GM12878 (cell line): ENCODE measurements at regions of chr4 and their contacts with region 1.

Region 1: GRCh38 chr4:26819478-26820095 is 41.1 kb upstream of the STIM2 start:
- DNase-seq: no peak
- ATAC-seq: peak; percentile 82
- H3K4me3 ChIP-seq: no peak overlapping the region
- H3K27ac ChIP-seq: no peak overlapping the region
- H3K4me1 ChIP-seq: peaks cover 16% of the 10 kb centered on the region
- H3K27me3 ChIP-seq: no peaks in the 10 kb centered on the region
- CTCF ChIP-seq: peak in 1 of 3 experiments; percentile 7; a peak in 1 of 6 replicates
- EP300 ChIP-seq: no peak
- POLR2A ChIP-seq: no peak
- RAD21 ChIP-seq: no peak

Region 2: DNA sequence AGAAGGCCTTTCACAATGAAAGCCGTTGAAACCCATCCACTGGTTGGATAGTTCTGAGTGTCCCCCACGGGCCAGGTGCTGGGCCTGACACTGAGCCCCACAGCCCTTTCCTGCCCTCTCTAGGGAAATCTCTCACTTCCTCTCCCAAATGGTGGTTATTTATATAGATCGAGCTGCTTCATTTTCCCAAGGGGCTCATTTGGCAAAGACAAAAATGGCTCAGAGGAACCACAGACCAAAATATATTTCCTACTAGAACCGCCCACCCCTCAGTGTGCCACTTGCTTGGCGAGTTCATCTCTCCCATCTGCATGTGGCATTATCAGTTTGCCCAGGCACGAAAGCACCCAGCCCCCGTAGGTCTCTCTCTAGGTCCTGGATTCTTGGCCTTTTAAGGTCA is 12.3 kb before region 1 on chr4:
- CTCF ChIA-PET with region 1: no interaction called
- POLR2A ChIA-PET with region 1: no interaction called
- RAD21 ChIA-PET with region 1: interaction called, 3 read pairs
- SMC1A ChIA-PET with region 1: interaction called, 10 read pairs
- in situ Hi-C with region 1: no loop called
- intact Hi-C with region 1: no loop called
- DNase-seq: peak; percentile 15
- ATAC-seq: peak; percentile 49
- H3K4me3 ChIP-seq: no peak overlapping the region
- H3K27ac ChIP-seq: no peak overlapping the region
- H3K4me1 ChIP-seq: peaks cover 7% of the 10 kb centered on the region; the same call in 1 of the 2 replicates
- H3K27me3 ChIP-seq: no peaks in the 10 kb centered on the region
- CTCF ChIP-seq: no peak
- EP300 ChIP-seq: no peak
- POLR2A ChIP-seq: no peak
- RAD21 ChIP-seq: no peak